ENCODE measurements at regions of chr6 and their contacts with region 1.

Region 1: GRCh38 chr6:129730477-129731165 is 20.6 kb upstream of the ARHGAP18 start:
- DNase-seq: no peak
- ATAC-seq: peak; percentile 87
- H3K4me3 ChIP-seq: no peak overlapping the region
- H3K27ac ChIP-seq: peak overlapping the region; percentile 43; the same call in 1 of the 2 replicates
- H3K4me1 ChIP-seq: no peaks in the 10 kb centered on the region
- H3K27me3 ChIP-seq: no peaks in the 10 kb centered on the region
- CTCF ChIP-seq: peak; percentile 57 to 70 (median 65)
- EP300 ChIP-seq: no peak
- POLR2A ChIP-seq: no peak
- RAD21 ChIP-seq: peak; percentile 96

Region 2: DNA sequence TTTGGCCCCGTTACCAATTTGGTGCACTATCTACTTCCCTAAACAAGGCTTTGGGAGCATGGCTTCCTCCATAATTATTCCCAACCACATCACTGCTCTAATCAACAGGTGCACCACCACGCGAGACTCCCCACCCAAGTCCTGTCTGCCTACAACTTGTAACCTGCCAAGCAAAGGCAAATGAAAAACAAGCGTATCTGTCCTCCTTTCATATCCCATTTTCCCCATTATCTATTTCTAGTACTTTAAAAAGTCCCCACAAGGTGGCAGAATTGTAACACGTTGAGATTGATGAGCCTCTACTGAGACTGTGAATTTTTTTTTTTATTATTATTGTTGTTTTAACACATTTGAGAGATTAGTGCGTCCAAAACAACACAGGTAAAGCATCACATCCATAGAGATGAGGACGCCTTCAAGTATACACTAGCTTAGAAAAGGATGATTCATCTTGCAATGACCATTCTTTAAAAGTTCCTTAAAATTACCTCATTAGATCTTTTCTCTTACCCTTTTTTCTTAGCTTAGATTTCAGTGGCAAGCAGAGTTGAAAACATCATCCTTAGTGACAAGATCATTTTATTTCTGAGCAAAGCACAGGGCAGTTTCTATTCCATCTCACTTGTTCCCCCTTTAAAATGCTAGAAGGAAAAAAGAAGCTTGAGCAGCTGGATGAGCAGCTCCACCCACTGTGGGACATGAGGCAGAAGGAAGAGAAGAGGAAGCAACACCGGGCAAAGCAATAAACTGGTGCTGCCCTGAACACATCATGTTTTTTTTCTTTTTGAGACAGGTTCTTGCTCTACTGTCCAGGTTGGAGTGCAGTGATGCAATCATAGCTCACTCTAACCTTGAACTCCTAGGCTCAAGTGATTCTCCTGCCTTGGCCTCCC is 231.4 kb before region 1 on chr6:
- CTCF ChIA-PET with region 1: interaction called, 141 read pairs
- POLR2A ChIA-PET with region 1: no interaction called
- RAD21 ChIA-PET with region 1: interaction called, 60 read pairs
- SMC1A ChIA-PET with region 1: interaction called, 95 read pairs
- in situ Hi-C with region 1: no loop called
- intact Hi-C with region 1: loop called (anchors 1 kb)
- DNase-seq: no peak
- ATAC-seq: peak; percentile 89
- H3K4me3 ChIP-seq: no peak overlapping the region
- H3K27ac ChIP-seq: no peak overlapping the region
- H3K4me1 ChIP-seq: peaks cover 6% of the 10 kb centered on the region
- H3K27me3 ChIP-seq: no peaks in the 10 kb centered on the region
- CTCF ChIP-seq: peak; percentile 37 to 63 (median 44); a peak in 5 of 6 replicates
- EP300 ChIP-seq: no peak
- POLR2A ChIP-seq: no peak
- RAD21 ChIP-seq: peak; percentile 88

Region 3: DNA sequence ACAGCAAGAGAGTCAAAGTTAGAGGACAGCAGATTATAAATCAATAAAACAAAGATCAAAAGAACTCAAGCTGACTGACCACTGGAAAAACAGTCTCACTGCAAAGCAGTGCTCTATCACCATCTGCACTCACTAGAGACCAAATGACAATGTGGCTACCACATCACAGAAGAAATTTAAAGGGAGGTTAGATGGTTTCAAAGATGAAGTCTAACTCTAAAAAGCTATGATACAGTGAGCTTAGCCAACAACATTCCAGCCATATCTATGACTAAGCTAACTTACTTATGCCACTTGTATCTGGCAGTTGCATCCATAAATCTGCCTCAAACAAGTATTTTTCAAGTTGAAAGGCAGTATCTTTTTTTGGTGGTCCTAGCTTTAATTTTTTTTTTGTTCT is 89.3 kb before region 1 on chr6:
- CTCF ChIA-PET with region 1: interaction called, 5 read pairs
- POLR2A ChIA-PET with region 1: no interaction called
- RAD21 ChIA-PET with region 1: interaction called, 10 read pairs
- SMC1A ChIA-PET with region 1: interaction called, 13 read pairs
- in situ Hi-C with region 1: no loop called
- intact Hi-C with region 1: no loop called
- DNase-seq: no peak
- ATAC-seq: no peak
- H3K4me3 ChIP-seq: no peak overlapping the region
- H3K27ac ChIP-seq: no peak overlapping the region
- H3K4me1 ChIP-seq: peaks cover 24% of the 10 kb centered on the region
- H3K27me3 ChIP-seq: no peaks in the 10 kb centered on the region
- CTCF ChIP-seq: no peak
- EP300 ChIP-seq: no peak
- POLR2A ChIP-seq: no peak
- RAD21 ChIP-seq: no peak

Region 4: GRCh38 chr6:129672881-129673643 is 57.6 kb before region 1 on chr6:
- CTCF ChIA-PET with region 1: interaction called, 165 read pairs
- POLR2A ChIA-PET with region 1: no interaction called
- RAD21 ChIA-PET with region 1: interaction called, 46 read pairs
- SMC1A ChIA-PET with region 1: interaction called, 169 read pairs
- in situ Hi-C with region 1: no loop called
- intact Hi-C with region 1: loop called (anchors 1 kb)
- DNase-seq: peak; percentile 60
- ATAC-seq: peak; percentile 82
- H3K4me3 ChIP-seq: peak overlapping the region; percentile 58; the same call in 1 of the 2 replicates
- H3K27ac ChIP-seq: peak overlapping the region; percentile 98
- H3K4me1 ChIP-seq: peaks cover 53% of the 10 kb centered on the region
- H3K27me3 ChIP-seq: no peaks in the 10 kb centered on the region
- CTCF ChIP-seq: no peak
- EP300 ChIP-seq: 0 out of 4 replicates have a peak, but pooled peaks of 1 of the 2 experiments have one; percentile 43
- POLR2A ChIP-seq: no peak
- RAD21 ChIP-seq: no peak

Region 5: DNA sequence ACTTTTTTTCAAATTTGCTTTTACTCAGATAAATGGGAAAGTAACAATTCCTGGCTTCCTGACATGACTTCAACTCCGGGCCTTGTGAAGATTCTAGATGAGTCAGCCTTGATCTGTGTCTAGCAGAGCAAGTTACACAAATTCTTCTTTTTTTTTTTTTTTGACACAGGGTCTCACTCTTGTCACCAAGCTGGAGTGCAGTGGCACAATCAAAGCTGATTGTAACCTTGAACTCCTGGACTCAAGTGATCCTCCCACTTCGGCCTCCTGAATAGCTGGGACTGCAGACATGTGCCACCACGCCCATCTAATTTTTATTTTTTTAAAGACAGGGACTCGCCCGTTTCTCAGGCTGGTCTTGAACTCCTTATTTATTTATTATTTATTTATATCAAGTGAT is 13.3 kb before region 1 on chr6:
- CTCF ChIA-PET with region 1: interaction called, 19 read pairs
- POLR2A ChIA-PET with region 1: interaction called, 4 read pairs
- RAD21 ChIA-PET with region 1: interaction called, 17 read pairs
- SMC1A ChIA-PET with region 1: interaction called, 247 read pairs
- in situ Hi-C with region 1: no loop called
- intact Hi-C with region 1: no loop called
- DNase-seq: no peak
- ATAC-seq: no peak
- H3K4me3 ChIP-seq: no peak overlapping the region
- H3K27ac ChIP-seq: no peak overlapping the region
- H3K4me1 ChIP-seq: no peaks in the 10 kb centered on the region
- H3K27me3 ChIP-seq: no peaks in the 10 kb centered on the region
- CTCF ChIP-seq: no peak
- EP300 ChIP-seq: no peak
- POLR2A ChIP-seq: no peak
- RAD21 ChIP-seq: no peak

Region 6: DNA sequence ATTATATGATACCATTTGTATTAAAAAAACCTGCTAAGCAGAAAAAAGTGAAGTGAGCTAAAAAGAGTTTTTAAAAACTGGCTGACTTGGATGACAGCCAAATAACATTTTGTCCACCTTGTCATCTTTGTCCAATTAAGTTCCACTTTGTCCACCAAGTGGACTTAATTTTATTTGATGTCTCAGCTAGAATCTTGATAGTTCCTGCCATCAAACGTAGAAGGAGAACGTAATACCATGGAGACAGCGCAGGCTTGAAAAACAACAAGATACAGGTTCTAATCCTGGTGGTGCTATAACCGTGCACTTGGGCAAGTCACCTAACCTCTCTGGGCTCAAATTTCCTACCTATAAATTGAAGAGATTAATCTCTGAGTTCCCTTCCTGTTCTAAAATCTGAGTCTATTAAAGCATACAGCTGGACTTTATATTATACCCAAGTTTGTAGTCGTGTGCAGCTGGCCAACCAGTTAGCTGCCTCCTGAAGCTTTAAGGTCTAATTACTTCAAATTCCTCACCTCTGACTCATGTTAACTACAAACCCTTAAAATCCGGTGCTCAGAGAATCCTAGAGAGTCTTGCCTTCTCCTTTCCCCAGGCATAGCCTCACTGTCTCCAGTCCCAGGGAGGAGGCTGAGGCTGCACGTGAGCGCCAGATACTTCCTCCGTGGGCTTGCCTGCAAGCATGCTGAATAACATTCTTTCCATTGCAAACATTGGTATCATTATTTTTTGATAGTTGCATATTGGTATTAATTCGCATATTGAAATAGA is 113.7 kb after region 1 on chr6:
- CTCF ChIA-PET with region 1: no interaction called
- POLR2A ChIA-PET with region 1: no interaction called
- RAD21 ChIA-PET with region 1: no interaction called
- SMC1A ChIA-PET with region 1: no interaction called
- in situ Hi-C with region 1: no loop called
- intact Hi-C with region 1: no loop called
- DNase-seq: no peak
- ATAC-seq: no peak
- H3K4me3 ChIP-seq: no peak overlapping the region
- H3K27ac ChIP-seq: no peak overlapping the region
- H3K4me1 ChIP-seq: no peaks in the 10 kb centered on the region
- H3K27me3 ChIP-seq: no peaks in the 10 kb centered on the region; a peak in 1 of 4 replicates
- CTCF ChIP-seq: no peak
- EP300 ChIP-seq: no peak
- POLR2A ChIP-seq: no peak
- RAD21 ChIP-seq: no peak

Region 7: GRCh38 chr6:130020907-130021629 is 290.4 kb after region 1 on chr6:
- CTCF ChIA-PET with region 1: interaction called, 15 read pairs
- POLR2A ChIA-PET with region 1: no interaction called
- RAD21 ChIA-PET with region 1: interaction called, 6 read pairs
- SMC1A ChIA-PET with region 1: interaction called, 7 read pairs
- in situ Hi-C with region 1: no loop called
- intact Hi-C with region 1: loop called (anchors 1 kb)
- DNase-seq: peak; percentile 72
- ATAC-seq: peak; percentile 82
- H3K4me3 ChIP-seq: peak overlapping the region; percentile 82
- H3K27ac ChIP-seq: no peak overlapping the region
- H3K4me1 ChIP-seq: no peaks in the 10 kb centered on the region
- H3K27me3 ChIP-seq: no peaks in the 10 kb centered on the region
- CTCF ChIP-seq: peak; percentile 80 to 94 (median 81); a peak in 5 of 6 replicates
- EP300 ChIP-seq: no peak
- POLR2A ChIP-seq: no peak
- RAD21 ChIP-seq: peak; percentile 94

Measured in GM12878 (cell line).